ENCODE measurements at regions of chr2 and their contacts with region 1.

Region 1: DNA sequence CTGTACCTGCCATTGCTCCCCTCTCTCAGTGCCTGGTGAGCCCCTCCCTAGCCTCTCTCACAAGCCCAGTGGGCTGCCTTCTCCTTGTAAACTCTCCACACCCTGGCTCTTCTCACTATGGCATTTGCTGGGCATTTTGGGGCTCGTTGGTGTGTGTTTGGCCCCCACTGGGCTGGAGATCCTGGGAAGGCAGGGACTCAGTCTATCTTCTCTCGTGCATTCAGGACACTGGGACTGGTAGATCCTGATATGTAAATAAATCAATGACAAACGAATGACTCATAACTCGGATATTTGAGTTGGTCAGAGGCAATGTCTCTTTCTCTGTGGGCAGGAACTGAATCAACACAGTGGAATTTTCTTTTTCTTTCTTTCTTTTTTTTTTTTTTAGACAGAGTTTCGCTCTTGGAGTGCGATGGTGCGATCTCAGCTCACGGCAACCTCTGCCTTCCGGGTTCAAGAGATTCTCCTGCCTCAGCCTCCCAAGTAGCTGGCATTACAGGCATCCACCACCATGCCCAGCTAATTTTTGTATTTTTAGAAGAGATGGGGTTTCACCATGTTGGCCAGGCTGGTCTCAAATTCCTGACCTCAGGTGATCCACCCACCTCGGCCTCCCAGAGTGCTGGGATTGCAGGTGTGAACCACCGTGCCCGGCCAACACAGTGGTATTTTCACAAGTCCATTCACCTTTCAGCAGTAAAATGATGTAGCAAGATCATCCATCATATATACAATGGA is 144.6 kb upstream of the SPRED2 start:
- DNase-seq: peak; percentile 87
- H3K4me3 ChIP-seq: no peak overlapping the region
- H3K27ac ChIP-seq: peak overlapping the region; percentile 88
- H3K4me1 ChIP-seq: peaks cover 19% of the 10 kb centered on the region
- H3K27me3 ChIP-seq: no peaks in the 10 kb centered on the region
- CTCF ChIP-seq: no peak
- POLR2A ChIP-seq: no peak

Region 2: DNA sequence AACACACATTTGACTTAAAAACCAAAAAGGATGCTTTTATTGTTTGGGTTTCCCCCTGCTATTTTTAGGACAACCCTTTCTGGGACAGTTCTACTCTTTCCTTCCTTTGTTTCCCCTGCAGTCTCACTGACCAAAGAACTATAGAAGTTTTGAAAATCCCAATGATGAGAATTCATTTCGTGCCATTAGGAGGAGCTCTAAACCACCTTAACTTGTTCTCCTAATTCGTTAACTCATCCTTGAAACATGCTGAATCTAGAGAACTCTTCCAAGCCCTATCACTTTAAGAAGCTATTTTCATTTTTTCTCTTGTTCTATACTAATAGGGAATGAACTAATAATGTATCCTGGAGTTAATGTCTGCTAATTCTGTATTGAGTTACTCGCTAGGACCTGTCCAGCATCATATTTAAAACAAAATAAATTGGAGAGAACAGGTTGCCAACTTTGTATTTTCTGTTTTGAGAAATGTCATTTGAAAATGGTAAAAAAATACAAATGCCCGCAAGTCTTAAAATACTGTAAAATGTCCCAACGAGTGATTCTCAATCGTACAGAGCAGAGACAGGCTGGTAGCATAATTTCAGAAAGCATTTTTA is 990.0 kb before region 1 on chr2:
- CTCF ChIA-PET with region 1: no interaction called
- POLR2A ChIA-PET with region 1: no interaction called
- dilution Hi-C with region 1: no loop called
- intact Hi-C with region 1: loop called (anchors 2 kb)
- DNase-seq: peak; percentile 69
- H3K4me3 ChIP-seq: no peak overlapping the region
- H3K27ac ChIP-seq: no peak overlapping the region
- H3K4me1 ChIP-seq: peaks cover 8% of the 10 kb centered on the region
- H3K27me3 ChIP-seq: no peaks in the 10 kb centered on the region
- CTCF ChIP-seq: peak; percentile 35 to 54
- POLR2A ChIP-seq: no peak

Region 3: DNA sequence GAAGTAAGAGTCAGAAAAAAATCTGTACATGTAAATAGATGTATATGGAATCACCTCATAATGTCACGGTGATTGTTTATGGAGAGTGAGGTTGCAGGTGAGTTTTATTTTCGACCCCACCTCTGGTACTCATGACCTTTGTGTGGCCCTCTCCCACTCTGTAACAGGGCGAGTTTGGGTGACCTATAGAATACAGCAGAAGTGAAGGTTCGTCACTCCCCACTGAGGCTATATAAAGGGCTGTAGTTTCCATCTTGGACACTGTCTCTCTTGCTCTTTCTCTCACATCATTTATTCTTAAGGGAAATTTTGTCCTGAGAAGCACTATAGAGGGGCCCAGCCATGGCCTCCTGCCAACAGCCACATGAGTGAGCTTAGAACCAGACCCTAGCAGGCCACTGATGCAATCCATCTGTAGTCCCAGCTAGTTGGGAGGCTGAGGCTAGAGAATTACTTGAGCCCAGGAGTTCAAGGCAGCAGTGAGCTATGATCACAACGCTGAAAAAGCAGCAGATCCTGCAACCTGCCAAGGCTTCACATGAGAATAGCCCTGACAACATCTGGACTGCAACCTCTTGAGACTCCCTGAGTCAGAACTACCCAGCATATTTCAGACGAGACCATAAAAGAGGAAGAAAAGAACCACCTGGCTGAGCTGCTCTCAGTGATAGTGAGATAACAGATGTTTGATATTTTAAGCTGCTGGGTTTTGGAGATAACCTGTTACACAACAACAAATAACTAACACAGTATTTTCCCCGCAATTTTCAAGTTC is 662.1 kb before region 1 on chr2:
- CTCF ChIA-PET with region 1: interaction called, 7 read pairs
- POLR2A ChIA-PET with region 1: no interaction called
- dilution Hi-C with region 1: no loop called
- intact Hi-C with region 1: loop called (anchors 1 kb)
- DNase-seq: no peak
- H3K4me3 ChIP-seq: no peak overlapping the region
- H3K27ac ChIP-seq: no peak overlapping the region
- H3K4me1 ChIP-seq: peaks cover 2% of the 10 kb centered on the region
- H3K27me3 ChIP-seq: peaks cover 2 to 4% of the 10 kb centered on the region in 2 experiments
- CTCF ChIP-seq: no peak
- POLR2A ChIP-seq: no peak

Region 4: GRCh38 chr2:65064728-65065552 is 512.1 kb before region 1 on chr2:
- CTCF ChIA-PET with region 1: interaction called, 4 read pairs
- POLR2A ChIA-PET with region 1: no interaction called
- dilution Hi-C with region 1: no loop called
- intact Hi-C with region 1: loop called (anchors 2 kb)
- DNase-seq: peak; percentile 93
- H3K4me3 ChIP-seq: no peak overlapping the region
- H3K27ac ChIP-seq: peak overlapping the region; percentile 48
- H3K4me1 ChIP-seq: peaks cover 33% of the 10 kb centered on the region
- H3K27me3 ChIP-seq: no peaks in the 10 kb centered on the region
- CTCF ChIP-seq: peak; percentile 54 to 61
- POLR2A ChIP-seq: no peak

Region 5: GRCh38 chr2:65264821-65265670 is 312.0 kb before region 1 on chr2:
- CTCF ChIA-PET with region 1: interaction called, 12 read pairs
- POLR2A ChIA-PET with region 1: interaction called, 8 read pairs
- dilution Hi-C with region 1: no loop called
- intact Hi-C with region 1: loop called (anchors 1 kb)
- DNase-seq: peak; percentile 73
- H3K4me3 ChIP-seq: no peak overlapping the region
- H3K27ac ChIP-seq: no peak overlapping the region
- H3K4me1 ChIP-seq: peaks cover 2% of the 10 kb centered on the region
- H3K27me3 ChIP-seq: no peaks in the 10 kb centered on the region
- CTCF ChIP-seq: peak; percentile 54 to 56
- POLR2A ChIP-seq: no peak

Region 6: DNA sequence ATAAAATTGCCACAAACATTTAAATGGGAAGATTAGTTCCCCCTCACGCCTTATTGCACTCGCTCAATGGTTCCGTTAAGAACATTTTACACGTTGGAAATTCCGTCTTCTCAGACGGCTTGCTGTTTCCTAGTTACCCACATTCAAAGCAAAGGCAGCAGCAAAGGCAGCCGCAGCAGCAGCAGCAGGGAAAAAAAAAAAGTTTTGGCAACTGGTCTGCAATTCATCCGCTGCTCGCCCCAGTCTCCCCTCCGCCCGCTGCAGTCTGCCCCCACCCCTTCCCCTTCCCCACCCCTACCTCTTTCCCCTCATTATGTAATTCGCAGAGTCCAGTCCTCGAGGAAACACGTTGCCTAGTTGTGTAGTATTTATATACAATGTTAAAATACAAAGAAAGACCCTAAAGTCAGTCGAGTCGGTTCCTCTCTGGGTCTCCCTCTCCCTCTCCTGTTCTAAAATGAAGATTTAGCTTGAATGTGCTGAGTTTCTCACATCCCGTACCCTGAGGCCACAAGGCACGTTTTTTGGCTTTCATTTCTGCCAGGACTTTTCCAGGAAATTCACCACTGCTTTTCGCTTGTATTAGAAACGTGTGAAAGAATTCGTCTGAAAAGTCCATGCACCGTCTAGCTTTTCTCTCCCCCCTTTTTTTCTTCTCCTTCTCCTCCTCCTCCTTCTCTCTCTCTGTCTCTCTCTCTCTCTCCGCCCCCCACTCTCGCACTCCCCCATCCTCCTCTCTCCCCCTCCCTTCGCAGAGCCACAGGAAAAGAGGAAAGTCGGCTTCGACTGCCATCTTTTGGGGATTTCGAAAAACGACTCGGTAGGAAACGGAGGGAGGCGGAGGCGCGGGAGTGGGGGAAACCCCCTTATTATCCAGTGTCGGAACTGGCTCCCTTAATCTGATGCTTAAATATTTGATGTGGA is 997.9 kb after region 1 on chr2:
- CTCF ChIA-PET with region 1: interaction called, 5 read pairs
- POLR2A ChIA-PET with region 1: no interaction called
- dilution Hi-C with region 1: no loop called
- intact Hi-C with region 1: loop called (anchors 2 kb)
- DNase-seq: peak; percentile 81
- H3K4me3 ChIP-seq: peak overlapping the region; percentile 56 to 92 (median 85)
- H3K27ac ChIP-seq: peak overlapping the region; percentile 74
- H3K4me1 ChIP-seq: peaks cover 18% of the 10 kb centered on the region
- H3K27me3 ChIP-seq: peaks cover 32 to 38% of the 10 kb centered on the region in 2 experiments
- CTCF ChIP-seq: peak; percentile 45 to 60
- POLR2A ChIP-seq: no peak